Psoas muscle (tissue), 8 donors: ENCODE measurements at regions of chr13 and their contacts with region 1.

Region 1: GRCh38 chr13:45370922-45371406 is 30.0 kb upstream of the TPT1 start:
- DNase-seq: peak; percentile 80 to 87
- ATAC-seq: peak; percentile 76 to 85 (median 78)
- H3K4me3 ChIP-seq: peak overlapping the region; percentile 49
- H3K27ac ChIP-seq: peak overlapping the region; percentile 54
- H3K4me1 ChIP-seq: peaks cover 47% of the 10 kb centered on the region
- H3K27me3 ChIP-seq: no peaks in the 10 kb centered on the region
- CTCF ChIP-seq: peak; percentile 99

Region 2: GRCh38 chr13:45464687-45465453 is 93.9 kb after region 1 on chr13 and contains the start of gene COG3:
- intact Hi-C with region 1: loop called in 1 of 2 experiments (anchors 2 kb)
- DNase-seq: peak; percentile 95 to 97
- ATAC-seq: peak; percentile 97 to 99 (median 98)
- H3K4me3 ChIP-seq: peak within 1 kb of the TSS; percentile 92
- H3K27ac ChIP-seq: peak within 1 kb of the TSS; percentile 96
- H3K4me1 ChIP-seq: peaks cover 45% of the 10 kb centered on the region
- H3K27me3 ChIP-seq: no peaks in the 10 kb centered on the region
- CTCF ChIP-seq: peak; percentile 32
- total RNA-seq, gene COG3: 10.1 to 18.5 (median 13.8) TPM

Region 3: GRCh38 chr13:45490068-45490467 is 119.1 kb after region 1 on chr13:
- intact Hi-C with region 1: loop called in 1 of 2 experiments (anchors 5 kb)
- DNase-seq: no peak
- ATAC-seq: peak in 2 of 4 donors; percentile 35 to 73
- H3K4me3 ChIP-seq: no peak overlapping the region
- H3K27ac ChIP-seq: no peak overlapping the region
- H3K4me1 ChIP-seq: no peaks in the 10 kb centered on the region
- H3K27me3 ChIP-seq: no peaks in the 10 kb centered on the region
- CTCF ChIP-seq: peak; percentile 20